ENCODE measurements at regions of chr2 and their contacts with region 1.

Region 1: DNA sequence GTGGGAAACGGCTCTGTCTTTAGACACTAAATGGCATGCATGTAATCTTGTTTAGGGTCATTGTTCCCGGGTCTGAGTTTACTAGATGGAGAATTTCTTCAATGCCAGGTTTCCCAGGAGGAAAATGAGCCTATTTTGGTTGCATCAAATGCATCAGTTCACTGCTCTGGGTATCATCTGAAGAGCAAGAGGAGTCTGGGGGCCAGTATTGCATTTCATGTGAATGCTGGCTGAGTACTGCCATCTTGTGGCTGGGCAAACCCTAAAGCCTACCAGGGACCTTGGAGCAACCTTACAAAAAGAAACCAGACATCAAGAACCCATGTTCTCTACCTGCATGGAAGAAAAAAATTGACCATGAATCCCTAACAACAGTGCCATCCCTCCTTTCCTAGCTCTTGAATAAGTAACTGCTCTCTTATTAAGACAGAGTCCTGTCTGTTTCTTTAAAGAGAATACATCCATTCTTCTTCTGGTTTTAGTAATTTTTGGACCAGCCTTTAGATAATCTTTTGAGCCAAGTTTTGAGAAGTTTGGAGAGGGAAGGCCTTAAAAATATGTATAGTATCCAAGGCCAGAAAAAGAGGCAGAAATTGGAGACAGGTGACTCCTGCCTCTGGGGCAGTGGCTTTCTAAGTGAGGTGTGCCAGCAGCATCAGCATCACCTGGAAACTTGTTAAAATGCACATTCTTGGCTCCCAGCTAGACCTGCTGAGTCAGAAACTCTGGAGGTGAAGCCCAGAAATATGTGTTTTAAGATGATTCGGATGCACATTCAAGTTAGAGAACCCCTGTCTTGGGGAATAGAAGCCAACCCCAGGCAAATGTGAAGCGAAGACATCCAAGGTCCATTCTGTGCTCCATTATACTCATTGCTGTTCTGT is 261.0 kb upstream of the CXCR4 start:
- DNase-seq: no peak
- ATAC-seq: peak; percentile 64

Region 2: GRCh38 chr2:135913727-135914365 is 465.1 kb before region 1 on chr2:
- intact Hi-C with region 1: loop called (anchors 1 kb)
- DNase-seq: no peak
- ATAC-seq: no peak

Region 3: DNA sequence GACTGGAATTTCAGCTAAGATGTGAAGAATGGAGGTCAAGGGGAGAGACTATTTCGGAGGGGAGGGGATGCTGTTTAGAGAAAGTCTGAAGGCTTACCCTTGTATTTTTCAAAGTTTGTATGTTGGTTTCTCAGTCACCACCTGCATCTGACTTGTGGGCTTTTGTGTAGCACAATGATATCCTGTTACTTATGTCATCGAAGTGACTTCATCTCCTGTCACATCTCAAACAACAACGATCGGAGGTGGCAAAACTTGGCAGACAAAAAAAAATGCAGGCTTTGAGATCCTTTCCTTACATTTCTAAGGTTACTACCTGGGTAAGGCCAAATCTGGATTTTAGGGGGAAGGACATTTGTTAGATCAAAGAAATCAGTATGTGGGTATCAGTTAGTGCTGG is 249.4 kb before region 1 on chr2:
- intact Hi-C with region 1: loop called (anchors 5 kb)
- DNase-seq: no peak
- ATAC-seq: no peak

Region 4: DNA sequence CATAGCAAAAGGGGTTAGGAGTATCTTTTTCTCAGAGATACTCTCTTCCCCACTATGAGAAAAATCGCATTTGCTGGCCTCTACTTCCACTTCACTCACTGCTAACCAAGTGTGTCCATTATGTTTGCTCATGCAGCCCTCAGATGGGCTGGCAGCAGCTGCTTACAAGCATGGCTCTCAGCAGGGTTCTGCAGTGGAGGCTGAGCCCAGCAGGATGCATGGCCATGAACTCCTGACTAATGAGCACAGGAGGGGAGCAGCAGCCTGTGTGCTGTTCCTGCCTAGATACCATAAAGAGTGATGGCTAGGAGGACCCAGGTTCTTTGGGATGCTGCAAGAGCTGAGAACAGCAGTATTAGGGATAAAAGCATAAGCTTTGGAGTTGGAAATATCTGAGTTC is 69.5 kb after region 1 on chr2:
- intact Hi-C with region 1: no loop called
- DNase-seq: no peak
- ATAC-seq: no peak

Region 5: DNA sequence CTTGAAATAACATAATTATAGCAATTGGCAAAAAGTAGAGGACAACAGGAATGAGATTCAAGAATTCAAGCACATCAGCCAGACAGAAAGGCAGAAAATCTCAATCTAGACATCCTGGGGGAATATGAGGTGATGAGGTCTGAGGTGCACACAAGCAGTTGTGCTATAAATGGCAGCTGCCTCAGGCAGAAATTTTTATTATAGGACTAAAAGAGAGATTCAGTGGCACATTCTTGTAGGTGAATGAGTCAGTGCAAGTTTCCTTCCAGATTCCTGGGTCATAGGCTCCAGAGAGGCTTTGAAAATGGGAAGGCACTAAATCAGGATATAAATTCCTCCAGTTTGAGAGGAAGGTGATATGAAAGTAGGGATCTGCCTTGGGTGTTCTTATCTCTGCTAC is 259.2 kb after region 1 on chr2:
- intact Hi-C with region 1: no loop called
- DNase-seq: no peak
- ATAC-seq: no peak

Measured in Right ventricle myocardium inferior (tissue), 1 donor.